OCI-LY7 (cell line): ENCODE measurements at regions of chr6 and their contacts with region 1.

Region 1: GRCh38 chr6:36546920-36547645 is at the start of gene STK38:
- DNase-seq: peak; percentile 94
- H3K4me3 ChIP-seq: peak within 1 kb of the TSS; percentile 84
- H3K27ac ChIP-seq: peak within 1 kb of the TSS; percentile 78
- H3K4me1 ChIP-seq: peaks cover 66% of the 10 kb centered on the region
- CTCF ChIP-seq: peak; percentile 58; the same call in 1 of the 2 replicates
- total RNA-seq, gene STK38: 22.4 and 29.4 TPM in 2 replicates

Region 2: DNA sequence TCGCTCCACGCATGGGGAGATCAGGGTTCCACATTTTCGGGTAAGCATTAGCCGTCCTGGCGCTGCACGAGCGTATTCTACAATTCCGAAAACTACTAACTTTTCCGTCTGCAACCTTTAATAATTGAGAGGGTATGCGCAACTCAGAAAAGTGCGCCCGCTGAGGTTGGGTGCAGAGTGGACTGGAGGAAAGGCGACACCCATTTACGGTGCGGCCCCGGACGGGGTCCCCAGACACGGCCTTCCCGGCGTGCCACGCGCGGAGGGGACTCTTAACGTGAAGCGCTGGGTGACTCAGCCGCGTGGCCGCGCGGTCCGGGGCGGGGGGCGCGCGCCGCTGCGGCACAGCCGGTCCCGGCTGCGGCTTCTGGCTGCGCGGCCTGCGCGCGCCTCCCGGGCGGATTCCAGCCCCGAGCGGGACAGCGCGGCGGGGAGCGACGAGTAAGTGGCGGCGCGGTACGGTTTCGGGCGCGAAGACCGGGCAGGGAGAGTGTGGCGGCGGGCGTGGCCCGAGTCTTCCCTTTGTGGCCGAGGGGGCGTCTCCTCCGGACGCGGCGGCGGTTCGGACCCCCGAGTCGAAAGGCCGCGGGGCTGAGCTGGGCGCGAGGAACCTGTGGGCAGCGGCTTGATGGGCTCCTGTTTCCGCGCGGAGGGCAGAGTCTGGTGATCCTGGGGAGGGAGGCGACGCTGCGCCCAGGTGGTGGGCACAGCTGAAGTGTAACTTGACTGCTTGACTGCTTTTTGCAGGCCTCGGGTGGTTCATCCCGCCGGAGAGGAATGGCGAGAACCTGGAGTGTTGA is 104.2 kb before region 1 on chr6 and contains the starts of genes KCTD20 and PXT1:
- CTCF ChIA-PET with region 1: no interaction called
- POLR2A ChIA-PET with region 1: interaction called, 6 read pairs
- intact Hi-C with region 1: loop called (anchors 1 kb)
- DNase-seq: peak; percentile 95
- H3K4me3 ChIP-seq: peak within 1 kb of the TSS; percentile 96
- H3K27ac ChIP-seq: peak within 1 kb of the TSS; percentile 85
- H3K4me1 ChIP-seq: peaks cover 33% of the 10 kb centered on the region
- CTCF ChIP-seq: peak; percentile 37; the same call in 1 of the 2 replicates
- total RNA-seq, gene KCTD20: 73.6 and 74.8 TPM in 2 replicates
- total RNA-seq, gene PXT1: 0.15 TPM in 1 of 2 replicates, not detected in the other

Region 3: DNA sequence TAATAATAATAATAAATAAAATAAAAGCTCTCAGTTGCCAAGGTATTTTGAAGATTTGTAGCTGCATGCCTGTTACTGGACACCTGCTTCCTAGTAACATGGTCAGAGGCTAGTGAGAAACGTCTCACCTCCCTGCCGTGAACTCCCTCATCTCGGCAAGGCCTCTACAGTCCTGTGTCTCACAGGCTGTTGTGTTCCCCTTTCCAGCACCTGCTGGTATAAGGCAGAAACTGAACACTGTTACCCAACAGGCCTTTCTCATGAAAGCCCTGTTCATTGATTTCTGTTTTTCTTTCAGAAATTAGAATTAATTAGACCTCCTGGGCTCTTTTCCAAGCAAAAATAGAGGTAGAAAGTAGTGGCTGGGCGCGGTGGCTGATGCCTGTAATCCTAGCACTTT is 29.5 kb after region 1 on chr6:
- CTCF ChIA-PET with region 1: no interaction called
- POLR2A ChIA-PET with region 1: interaction called, 10 read pairs
- intact Hi-C with region 1: no loop called
- DNase-seq: peak; percentile 59
- H3K4me3 ChIP-seq: no peak overlapping the region
- H3K27ac ChIP-seq: no peak overlapping the region
- H3K4me1 ChIP-seq: peaks cover 28% of the 10 kb centered on the region
- CTCF ChIP-seq: no peak